GM23248 (cell line): ENCODE measurements at regions of chr11 and their contacts with region 1.

Region 1: GRCh38 chr11:78676026-78676557 is 101.4 kb upstream of the NARS2 start:
- DNase-seq: no peak
- H3K4me3 ChIP-seq: no peak overlapping the region
- H3K27ac ChIP-seq: no peak overlapping the region
- H3K4me1 ChIP-seq: no peaks in the 10 kb centered on the region
- H3K27me3 ChIP-seq: no peaks in the 10 kb centered on the region; the same call in 1 of the 2 replicates

Region 2: GRCh38 chr11:78731027-78731426 is 54.9 kb after region 1 on chr11:
- in situ Hi-C with region 1: loop called (anchors 10 kb)
- DNase-seq: no peak
- H3K4me3 ChIP-seq: no peak overlapping the region
- H3K27ac ChIP-seq: no peak overlapping the region
- H3K4me1 ChIP-seq: no peaks in the 10 kb centered on the region
- H3K27me3 ChIP-seq: no peaks in the 10 kb centered on the region; the same call in 1 of the 2 replicates